Left colon (tissue), 2 donors: ENCODE measurements at regions of chrX and their contacts with region 1.

Region 1: DNA sequence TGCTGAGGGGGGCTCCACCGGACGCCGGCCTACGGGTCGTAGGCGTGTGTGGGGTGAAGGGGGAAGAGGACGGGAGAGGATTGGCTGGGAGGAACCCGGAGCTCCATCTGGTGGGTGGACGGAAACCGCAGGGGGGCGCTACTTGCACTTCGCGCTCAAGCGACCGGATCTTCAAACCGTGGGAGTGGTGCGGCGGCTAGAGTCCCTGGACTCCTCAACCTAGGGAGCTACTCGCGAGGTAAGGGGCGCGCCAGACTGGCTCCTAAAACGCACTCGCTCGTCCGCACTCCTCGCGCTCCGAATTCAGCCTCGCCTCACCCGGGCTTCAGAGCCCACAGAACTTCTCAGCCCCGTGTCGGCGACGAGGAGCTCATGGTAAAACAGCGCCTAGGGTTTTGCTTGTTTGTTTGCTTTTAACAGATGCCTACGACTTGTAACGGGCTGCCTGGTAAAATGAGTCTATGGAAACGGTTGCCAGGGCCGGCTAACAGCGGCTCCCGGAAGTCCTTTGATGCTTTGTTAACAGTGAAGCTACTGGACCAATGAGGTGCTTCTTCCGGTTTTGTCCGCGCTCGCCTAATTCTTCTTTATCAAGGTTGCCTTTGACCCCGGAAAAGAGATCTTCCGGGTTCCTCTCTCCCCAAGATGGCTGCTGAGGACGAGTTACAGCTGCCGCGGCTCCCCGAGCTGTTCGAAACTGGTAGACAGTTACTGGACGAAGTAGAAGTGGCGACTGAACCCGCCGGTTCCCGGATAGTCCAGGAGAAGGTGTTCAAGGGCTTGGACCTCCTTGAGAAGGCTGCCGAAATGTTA is at the start of gene IGBP1:
- DNase-seq: peak; percentile 83 to 89
- ATAC-seq: peak; percentile 89
- total RNA-seq, gene IGBP1: 64.0 to 85.0 TPM

Region 2: GRCh38 chrX:70253377-70254062 is 120.0 kb after region 1 on chrX:
- intact Hi-C with region 1: no loop called
- DNase-seq: no peak
- ATAC-seq: no peak

Region 3: GRCh38 chrX:70422851-70423341 is 289.4 kb after region 1 on chrX and contains the start of gene GDPD2:
- intact Hi-C with region 1: loop called in 1 of 2 experiments (anchors 10 kb)
- DNase-seq: peak in 1 of 2 donors; percentile 38
- ATAC-seq: peak; percentile 90
- total RNA-seq, gene GDPD2: 23.3 to 23.5 TPM